ACHN (cell line): ENCODE measurements at regions of chr17 and their contacts with region 1.

Region 1: DNA sequence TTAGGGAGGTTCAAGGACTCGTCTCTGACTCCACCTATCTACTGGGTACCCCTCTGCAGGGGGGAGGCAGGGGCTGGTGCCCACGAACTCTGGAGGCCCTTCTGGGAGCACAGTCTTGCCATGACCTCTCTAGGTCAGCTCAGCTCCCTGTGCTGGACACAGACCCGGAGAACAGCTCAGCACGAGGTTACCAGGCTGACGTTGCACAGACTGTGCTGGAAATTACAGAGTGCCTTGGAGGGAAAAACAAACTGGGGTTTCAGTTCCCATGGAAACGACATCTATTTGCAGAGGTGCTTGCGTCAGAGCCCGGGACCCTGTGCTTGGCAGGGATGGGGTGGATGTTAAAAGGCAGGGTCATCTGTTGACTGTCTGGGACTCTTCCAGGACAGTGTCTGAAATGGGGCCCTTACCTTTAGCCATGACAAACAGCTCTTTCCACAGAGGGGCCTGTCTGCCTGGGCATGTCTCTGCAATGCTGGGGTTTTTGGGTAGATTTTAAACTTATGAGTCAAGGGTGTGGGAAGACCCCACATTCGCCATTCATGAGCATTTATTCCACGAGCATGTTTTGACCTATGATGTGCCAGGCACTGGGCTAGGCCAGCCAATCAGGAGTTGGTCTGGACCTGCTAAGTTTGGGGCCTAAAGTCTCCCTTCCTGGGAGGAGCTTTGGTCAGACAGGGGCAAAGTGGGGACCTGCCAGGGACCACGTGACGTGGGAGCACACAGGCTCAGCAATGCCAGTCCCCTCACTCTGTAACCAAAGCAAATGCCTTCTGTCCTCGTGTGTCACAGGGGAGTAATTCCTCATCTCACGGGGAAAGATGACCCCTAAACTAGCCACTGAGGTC is 22.5 kb downstream of the CCR7 start:
- DNase-seq: no peak

Region 2: DNA sequence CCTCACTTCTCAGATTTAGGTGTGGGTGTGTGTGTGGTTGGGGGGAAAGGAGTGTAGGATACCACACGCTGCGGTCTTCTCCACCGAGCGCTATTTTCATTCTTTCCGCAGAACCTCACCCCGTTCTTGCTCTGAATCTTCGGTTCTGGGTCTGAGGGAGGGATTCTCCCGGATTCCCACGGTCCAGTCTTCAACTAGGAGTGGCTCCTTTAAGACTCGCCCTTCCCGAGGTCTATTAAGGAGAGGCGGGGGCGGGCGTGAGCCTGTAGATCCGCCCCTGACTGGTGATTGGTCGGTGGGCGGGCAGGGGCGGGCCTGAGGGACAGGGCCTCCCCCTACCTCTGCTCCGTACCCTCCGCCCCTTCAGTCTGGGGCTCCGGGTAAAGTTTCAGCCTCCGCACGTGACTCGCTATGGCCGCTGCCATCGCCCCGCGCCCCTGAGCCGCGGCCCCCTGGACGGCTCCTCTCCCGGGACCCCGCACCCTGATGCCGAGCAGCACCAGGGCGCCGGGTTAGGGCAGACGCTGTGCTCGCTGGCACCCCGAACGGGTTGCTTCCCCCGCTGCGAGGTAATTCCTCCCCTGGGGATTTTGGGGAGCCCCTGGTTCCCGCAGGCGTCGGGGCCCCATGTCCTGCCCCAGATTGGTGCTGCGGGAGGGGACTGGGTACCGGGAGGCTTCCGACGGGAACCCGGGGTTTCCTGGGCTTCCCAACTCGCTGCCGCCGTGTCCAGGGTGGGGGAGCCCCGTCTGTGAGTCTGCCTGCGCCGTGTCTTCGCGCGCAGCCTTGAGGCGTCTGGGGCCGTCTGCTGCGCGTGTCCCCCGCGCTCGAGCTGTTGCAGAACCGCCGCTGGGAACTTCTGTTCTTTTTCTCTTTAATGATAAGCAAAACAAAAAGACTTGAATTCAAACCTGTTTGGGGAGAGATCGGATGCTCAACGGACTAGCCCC is 224.6 kb before region 1 on chr17:
- in situ Hi-C with region 1: loop called (anchors 25 kb)
- DNase-seq: peak; percentile 97

Region 3: GRCh38 chr17:40443583-40444327 is 99.0 kb before region 1 on chr17:
- in situ Hi-C with region 1: loop called (anchors 25 kb)
- DNase-seq: peak; percentile 77

Region 4: GRCh38 chr17:40810505-40810904 is 267.7 kb after region 1 on chr17:
- in situ Hi-C with region 1: no loop called
- DNase-seq: peak; percentile 11

Region 5: DNA sequence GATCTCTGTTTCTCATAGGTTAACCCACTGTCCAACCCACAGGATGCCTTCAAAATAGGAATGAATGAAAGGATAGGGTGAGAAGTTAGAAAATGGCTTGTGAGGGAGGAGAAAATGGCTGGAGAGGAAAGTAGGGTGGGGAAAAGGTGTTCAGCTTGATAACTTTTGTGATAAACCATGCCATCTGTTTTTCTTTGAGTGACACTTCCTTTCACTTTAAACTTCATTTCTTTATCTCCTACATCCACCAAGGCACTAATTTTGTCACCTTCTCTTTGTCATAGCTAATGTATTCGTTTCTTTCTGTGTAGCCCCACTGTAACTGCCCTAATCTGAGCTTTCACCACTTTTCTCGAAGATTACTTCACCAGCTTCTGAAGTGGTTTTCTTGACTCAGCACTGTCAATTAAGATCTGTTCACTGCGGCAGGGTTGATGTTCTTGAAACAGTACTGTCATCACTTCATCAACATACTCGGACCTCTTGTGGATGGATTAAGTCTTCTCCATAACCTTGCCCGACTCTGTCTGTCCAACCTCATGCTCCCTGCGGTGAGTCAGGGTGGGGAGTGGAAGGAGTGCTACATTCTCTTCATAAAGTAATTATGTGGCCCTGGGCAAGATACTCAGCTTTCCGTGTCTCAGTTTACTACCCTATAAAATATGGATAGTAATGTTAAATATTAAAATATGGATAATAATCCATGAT is 285.1 kb after region 1 on chr17:
- in situ Hi-C with region 1: no loop called
- DNase-seq: no peak

Region 6: GRCh38 chr17:41251261-41251660 is 708.5 kb after region 1 on chr17:
- in situ Hi-C with region 1: no loop called
- DNase-seq: no peak